Natural killer cell (primary cell): ENCODE measurements at regions of chr9 and their contacts with region 1.

Region 1: GRCh38 chr9:37746848-37747753 is 6.5 kb upstream of the TRMT10B start:
- DNase-seq: peak; percentile 23 to 74
- ATAC-seq: peak; percentile 68 to 88 (median 78)
- H3K4me3 ChIP-seq: no peak overlapping the region
- H3K4me3 Mint-ChIP-seq: no peak overlapping the region
- H3K27ac ChIP-seq: no peak overlapping the region
- H3K27ac Mint-ChIP-seq: no peak overlapping the region
- H3K4me1 ChIP-seq: no peaks in the 10 kb centered on the region
- H3K4me1 Mint-ChIP-seq: no peaks in the 10 kb centered on the region
- H3K27me3 ChIP-seq: no peaks in the 10 kb centered on the region
- H3K27me3 Mint-ChIP-seq: no peaks in the 10 kb centered on the region
- CTCF ChIP-seq: peak; percentile 81

Region 2: GRCh38 chr9:38263532-38263931 is 516.4 kb after region 1 on chr9:
- intact Hi-C with region 1: loop called (anchors 5 kb)
- DNase-seq: peak in 1 of 2 donors; percentile 45
- ATAC-seq: peak in 1 of 3 donors; percentile 36
- H3K4me3 ChIP-seq: no peak overlapping the region
- H3K4me3 Mint-ChIP-seq: no peak overlapping the region
- H3K27ac ChIP-seq: no peak overlapping the region
- H3K27ac Mint-ChIP-seq: no peak overlapping the region
- H3K4me1 ChIP-seq: no peaks in the 10 kb centered on the region
- H3K4me1 Mint-ChIP-seq: no peaks in the 10 kb centered on the region
- H3K27me3 ChIP-seq: peaks cover 2% of the 10 kb centered on the region
- H3K27me3 Mint-ChIP-seq: peaks cover 18 to 59% of the 10 kb centered on the region in 2 donors
- CTCF ChIP-seq: peak; percentile 63

Region 3: DNA sequence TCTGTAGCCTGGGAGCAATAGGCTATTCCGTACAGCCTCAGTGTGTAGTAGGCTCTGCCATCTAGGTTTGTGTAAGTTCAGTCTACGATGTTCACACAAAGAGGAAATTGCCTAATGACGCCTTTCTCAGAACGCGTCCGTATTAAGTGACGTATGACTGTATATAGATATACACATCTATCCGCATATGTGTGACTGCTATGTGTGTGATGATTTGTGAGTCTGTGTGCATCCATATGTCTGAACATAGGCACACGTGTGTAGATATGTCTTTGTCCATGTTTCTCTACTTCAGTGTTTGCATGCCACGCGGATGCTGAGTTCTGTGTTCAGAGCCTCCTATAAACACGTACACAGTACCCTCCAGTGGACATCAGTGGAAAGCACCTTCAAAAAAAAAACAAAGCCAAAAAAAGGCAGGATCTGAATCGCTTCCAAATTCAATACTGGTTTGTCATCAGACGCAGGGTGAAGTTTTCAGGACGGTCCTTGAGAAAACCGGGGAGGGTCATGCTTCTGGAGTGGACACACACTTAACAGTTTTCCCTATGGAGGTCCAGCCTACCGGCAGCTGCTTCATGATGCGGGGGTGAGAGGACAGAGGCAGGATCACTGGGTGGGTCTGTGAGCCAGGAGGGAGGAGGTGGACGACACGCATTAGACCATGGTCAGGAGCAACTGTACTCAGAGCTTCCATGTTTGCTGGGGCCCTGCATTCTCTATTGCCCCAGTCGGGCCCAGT is 615.9 kb after region 1 on chr9:
- intact Hi-C with region 1: loop called (anchors 5 kb)
- DNase-seq: peak in 1 of 2 donors; percentile 61
- ATAC-seq: peak; percentile 68 to 89 (median 89)
- H3K4me3 ChIP-seq: no peak overlapping the region
- H3K4me3 Mint-ChIP-seq: peak overlapping the region; percentile 75
- H3K27ac ChIP-seq: no peak overlapping the region
- H3K27ac Mint-ChIP-seq: peak overlapping the region in 1 of 2 donors; percentile 72
- H3K4me1 ChIP-seq: peaks cover 3% of the 10 kb centered on the region
- H3K4me1 Mint-ChIP-seq: peaks cover 7 to 8% of the 10 kb centered on the region in 2 donors
- H3K27me3 ChIP-seq: no peaks in the 10 kb centered on the region
- H3K27me3 Mint-ChIP-seq: peaks cover 4 to 13% of the 10 kb centered on the region in 2 donors
- CTCF ChIP-seq: peak; percentile 51